CD8-positive, alpha-beta T cell (primary cell): ENCODE measurements at regions of chr11 and their contacts with region 1.

Region 1: GRCh38 chr11:66081505-66081904 is 11.4 kb downstream of the PACS1 start:
- DNase-seq: peak; percentile 58 to 92 (median 85)
- ATAC-seq: peak; percentile 89
- H3K4me3 ChIP-seq: peak overlapping the region; percentile 28 to 40
- H3K4me3 Mint-ChIP-seq: peak overlapping the region; percentile 83
- H3K27ac ChIP-seq: peak overlapping the region; percentile 72 to 89
- H3K27ac Mint-ChIP-seq: peak overlapping the region; percentile 99
- H3K4me1 ChIP-seq: peaks cover 90% of the 10 kb centered on the region
- H3K4me1 Mint-ChIP-seq: peaks cover 92% of the 10 kb centered on the region
- H3K27me3 ChIP-seq: no peaks in the 10 kb centered on the region
- H3K27me3 Mint-ChIP-seq: no peaks in the 10 kb centered on the region
- CTCF ChIP-seq: no peak

Region 2: GRCh38 chr11:66100272-66101065 is 19.0 kb after region 1 on chr11:
- CTCF ChIA-PET with region 1: interaction called, 4 read pairs
- POLR2A ChIA-PET with region 1: interaction called, 15 read pairs
- intact Hi-C with region 1: loop called (anchors 1 to 2 kb)
- DNase-seq: peak; percentile 31 to 88 (median 73)
- ATAC-seq: peak; percentile 90
- H3K4me3 ChIP-seq: peak overlapping the region; percentile 40 to 48
- H3K4me3 Mint-ChIP-seq: peak overlapping the region; percentile 82
- H3K27ac ChIP-seq: peak overlapping the region; percentile 45 to 82
- H3K27ac Mint-ChIP-seq: peak overlapping the region; percentile 95
- H3K4me1 ChIP-seq: peaks cover 70% of the 10 kb centered on the region
- H3K4me1 Mint-ChIP-seq: peaks cover 69% of the 10 kb centered on the region
- H3K27me3 ChIP-seq: no peaks in the 10 kb centered on the region
- H3K27me3 Mint-ChIP-seq: no peaks in the 10 kb centered on the region
- CTCF ChIP-seq: no peak

Region 3: DNA sequence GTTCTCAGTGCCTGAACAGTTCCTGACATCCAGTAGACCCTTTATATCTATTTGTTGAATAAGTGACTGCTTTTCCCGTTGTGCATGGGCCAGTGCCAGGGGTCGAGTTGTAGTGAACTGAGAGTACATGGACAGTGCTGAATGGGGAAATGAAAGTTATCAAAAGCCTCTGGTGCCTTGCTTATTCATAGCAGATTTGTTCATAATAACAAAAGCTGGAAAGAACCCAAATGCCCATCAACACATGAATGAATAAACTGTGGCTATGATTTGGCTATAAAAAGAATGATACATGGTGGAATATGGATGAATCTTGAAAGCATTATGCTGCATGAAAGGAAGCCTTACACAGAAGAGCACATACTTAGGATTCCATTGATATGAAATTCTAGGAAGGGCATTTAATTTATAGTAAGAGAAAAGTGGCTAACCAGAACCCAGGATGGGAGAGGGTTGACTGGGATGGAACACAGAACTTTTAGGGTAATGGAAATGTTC is 31.1 kb after region 1 on chr11:
- CTCF ChIA-PET with region 1: interaction called, 8 read pairs
- POLR2A ChIA-PET with region 1: interaction called, 29 read pairs
- intact Hi-C with region 1: loop called in 1 of 2 experiments (anchors 5 kb)
- DNase-seq: no peak
- ATAC-seq: no peak
- H3K4me3 ChIP-seq: no peak overlapping the region
- H3K4me3 Mint-ChIP-seq: peak overlapping the region; percentile 38
- H3K27ac ChIP-seq: peak overlapping the region in 1 of 2 experiments; percentile 47
- H3K27ac Mint-ChIP-seq: peak overlapping the region; percentile 89
- H3K4me1 ChIP-seq: peaks cover 88% of the 10 kb centered on the region
- H3K4me1 Mint-ChIP-seq: peaks cover 94% of the 10 kb centered on the region
- H3K27me3 ChIP-seq: no peaks in the 10 kb centered on the region
- H3K27me3 Mint-ChIP-seq: no peaks in the 10 kb centered on the region
- CTCF ChIP-seq: no peak

Region 4: GRCh38 chr11:66119348-66120133 is 38.0 kb after region 1 on chr11:
- CTCF ChIA-PET with region 1: interaction called, 5 read pairs
- POLR2A ChIA-PET with region 1: interaction called, 29 read pairs
- intact Hi-C with region 1: loop called in 1 of 2 experiments (anchors 5 kb)
- DNase-seq: no peak
- ATAC-seq: no peak
- H3K4me3 ChIP-seq: no peak overlapping the region
- H3K4me3 Mint-ChIP-seq: peak overlapping the region; percentile 20
- H3K27ac ChIP-seq: peak overlapping the region in 1 of 2 experiments; percentile 75
- H3K27ac Mint-ChIP-seq: peak overlapping the region; percentile 83
- H3K4me1 ChIP-seq: peaks cover 83% of the 10 kb centered on the region
- H3K4me1 Mint-ChIP-seq: peaks cover 87% of the 10 kb centered on the region
- H3K27me3 ChIP-seq: no peaks in the 10 kb centered on the region
- H3K27me3 Mint-ChIP-seq: no peaks in the 10 kb centered on the region
- CTCF ChIP-seq: no peak

Region 5: DNA sequence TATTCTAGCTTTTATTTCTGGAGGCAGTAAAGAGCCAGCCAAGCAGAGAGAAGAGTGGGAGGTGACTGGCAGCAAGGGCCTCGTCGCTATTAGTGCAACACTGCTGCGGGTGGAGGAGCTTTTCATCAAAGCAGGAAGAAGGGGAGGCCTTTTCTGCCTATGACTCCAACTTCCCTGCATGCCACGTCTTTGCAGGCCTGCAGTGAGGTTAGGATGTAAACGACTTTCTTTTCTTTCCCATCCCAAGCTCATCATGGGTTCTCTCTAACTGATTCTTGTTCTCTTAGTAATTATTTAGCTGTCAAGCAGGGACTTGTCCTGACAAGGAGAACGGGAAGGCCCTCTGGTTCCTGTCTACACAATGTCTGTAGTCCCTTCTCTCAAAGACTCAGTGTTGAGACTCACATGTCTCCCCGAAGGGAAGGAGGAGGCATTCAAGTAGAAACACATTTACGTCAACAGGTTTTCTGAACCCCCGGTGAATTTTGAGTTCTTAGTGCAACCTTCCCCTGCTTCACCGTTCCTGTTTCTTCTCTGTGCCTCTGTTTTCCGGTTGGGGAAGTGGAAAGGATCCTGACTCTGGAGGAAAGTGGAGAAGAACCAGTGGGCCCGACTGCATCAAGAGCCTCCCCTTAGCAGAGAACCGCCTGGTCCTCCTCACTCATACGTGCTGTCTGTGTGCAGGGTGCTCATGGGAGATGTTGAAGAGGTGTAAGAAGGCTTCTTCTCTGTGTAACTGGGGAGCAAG is 45.5 kb after region 1 on chr11:
- CTCF ChIA-PET with region 1: interaction called, 6 read pairs
- POLR2A ChIA-PET with region 1: interaction called, 8 read pairs
- intact Hi-C with region 1: loop called in 1 of 2 experiments (anchors 1 kb)
- DNase-seq: peak; percentile 18 to 79 (median 61)
- ATAC-seq: peak; percentile 94
- H3K4me3 ChIP-seq: peak overlapping the region; percentile 2 to 6
- H3K4me3 Mint-ChIP-seq: peak overlapping the region; percentile 78
- H3K27ac ChIP-seq: peak overlapping the region; percentile 37 to 73
- H3K27ac Mint-ChIP-seq: peak overlapping the region; percentile 99
- H3K4me1 ChIP-seq: peaks cover 70% of the 10 kb centered on the region
- H3K4me1 Mint-ChIP-seq: peaks cover 80% of the 10 kb centered on the region
- H3K27me3 ChIP-seq: no peaks in the 10 kb centered on the region
- H3K27me3 Mint-ChIP-seq: no peaks in the 10 kb centered on the region
- CTCF ChIP-seq: no peak

Region 6: DNA sequence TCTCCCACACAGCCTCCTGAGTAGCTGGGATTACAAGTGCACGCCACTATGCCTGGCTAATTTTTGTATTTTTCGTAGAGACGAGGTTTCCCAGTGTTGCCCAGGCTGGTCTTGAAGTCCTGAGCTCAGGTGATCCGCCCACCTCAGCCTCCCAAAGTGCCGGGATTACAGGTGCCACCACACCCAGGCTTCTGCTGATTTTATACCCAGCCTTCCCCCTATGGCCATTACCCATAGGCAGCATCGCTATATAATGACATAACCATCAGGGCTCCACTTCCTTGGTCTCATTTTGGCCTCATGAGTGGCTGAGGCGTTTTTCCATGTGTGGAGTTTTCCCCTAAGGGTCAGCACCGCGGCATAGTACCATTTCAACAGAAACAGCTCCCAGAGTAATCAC is 126.4 kb after region 1 on chr11:
- CTCF ChIA-PET with region 1: no interaction called
- POLR2A ChIA-PET with region 1: no interaction called
- intact Hi-C with region 1: no loop called
- DNase-seq: peak in 1 of 9 experiments; percentile 9
- ATAC-seq: no peak
- H3K4me3 ChIP-seq: no peak overlapping the region
- H3K4me3 Mint-ChIP-seq: no peak overlapping the region
- H3K27ac ChIP-seq: no peak overlapping the region
- H3K27ac Mint-ChIP-seq: peak overlapping the region; percentile 49
- H3K4me1 ChIP-seq: no peaks in the 10 kb centered on the region
- H3K4me1 Mint-ChIP-seq: peaks cover 2% of the 10 kb centered on the region
- H3K27me3 ChIP-seq: no peaks in the 10 kb centered on the region
- H3K27me3 Mint-ChIP-seq: no peaks in the 10 kb centered on the region
- CTCF ChIP-seq: no peak